GM13977 (cell line): ENCODE measurements at regions of chr15 and their contacts with region 1.

Region 1: GRCh38 chr15:76139368-76140073 is 79.7 kb downstream of the TMEM266 start:
- DNase-seq: peak; percentile 85
- CTCF ChIP-seq: peak; percentile 91

Region 2: GRCh38 chr15:75801859-75802593 is 337.5 kb before region 1 on chr15:
- in situ Hi-C with region 1: loop called (anchors 25 kb)
- DNase-seq: peak; percentile 86
- CTCF ChIP-seq: peak; percentile 82

Region 3: DNA sequence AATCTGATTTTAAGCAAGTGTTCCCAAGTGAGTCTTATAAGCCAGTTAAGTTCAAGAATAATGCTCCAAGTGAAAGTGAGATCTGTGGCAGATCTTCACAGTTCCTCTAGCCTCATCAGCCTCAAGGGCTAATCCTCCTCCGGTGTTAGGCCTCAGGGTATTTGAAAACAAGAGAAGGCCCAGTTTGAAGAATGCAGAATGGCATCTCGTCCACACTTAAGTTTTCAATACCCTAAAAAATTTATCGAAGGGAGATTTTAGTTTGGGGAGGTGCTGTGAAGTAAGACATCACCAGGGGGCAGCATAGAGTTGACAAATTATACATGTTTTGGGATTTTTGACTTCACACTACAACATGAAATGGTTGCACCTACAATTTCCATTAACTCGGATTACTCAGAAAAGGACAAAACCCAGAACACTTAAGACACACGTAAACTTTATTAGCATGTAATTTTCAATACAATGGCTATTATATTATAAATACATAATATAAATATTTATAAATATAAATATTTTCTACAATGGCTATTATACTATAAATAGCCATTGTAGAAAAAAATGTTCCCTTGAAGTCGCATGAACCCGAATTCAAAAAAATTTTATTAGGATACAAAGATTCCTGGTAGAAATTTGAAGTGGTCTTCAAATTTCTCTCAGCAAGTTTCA is 82.1 kb before region 1 on chr15:
- in situ Hi-C with region 1: loop called (anchors 10 kb)
- DNase-seq: peak; percentile 63
- CTCF ChIP-seq: peak; percentile 59